Naive thymus-derived CD4-positive, alpha-beta T cell (primary cell): ENCODE measurements at regions of chr19 and their contacts with region 1.

Region 1: GRCh38 chr19:41746593-41747227 is 8.6 kb upstream of the CEACAM6 start:
- DNase-seq: peak in 8 of 9 donors; percentile 27 to 62 (median 48)
- ATAC-seq: peak; percentile 82
- H3K4me3 ChIP-seq: no peak overlapping the region
- H3K4me3 Mint-ChIP-seq: no peak overlapping the region
- H3K27ac ChIP-seq: no peak overlapping the region
- H3K27ac Mint-ChIP-seq: no peak overlapping the region
- H3K4me1 ChIP-seq: no peaks in the 10 kb centered on the region
- H3K4me1 Mint-ChIP-seq: peaks cover 0 to 10% (median 0%) of the 10 kb centered on the region in 7 donors
- H3K27me3 ChIP-seq: peaks cover 0 to 3% of the 10 kb centered on the region in 2 donors
- H3K27me3 Mint-ChIP-seq: peaks cover 45 to 71% (median 46%) of the 10 kb centered on the region in 5 donors

Region 2: DNA sequence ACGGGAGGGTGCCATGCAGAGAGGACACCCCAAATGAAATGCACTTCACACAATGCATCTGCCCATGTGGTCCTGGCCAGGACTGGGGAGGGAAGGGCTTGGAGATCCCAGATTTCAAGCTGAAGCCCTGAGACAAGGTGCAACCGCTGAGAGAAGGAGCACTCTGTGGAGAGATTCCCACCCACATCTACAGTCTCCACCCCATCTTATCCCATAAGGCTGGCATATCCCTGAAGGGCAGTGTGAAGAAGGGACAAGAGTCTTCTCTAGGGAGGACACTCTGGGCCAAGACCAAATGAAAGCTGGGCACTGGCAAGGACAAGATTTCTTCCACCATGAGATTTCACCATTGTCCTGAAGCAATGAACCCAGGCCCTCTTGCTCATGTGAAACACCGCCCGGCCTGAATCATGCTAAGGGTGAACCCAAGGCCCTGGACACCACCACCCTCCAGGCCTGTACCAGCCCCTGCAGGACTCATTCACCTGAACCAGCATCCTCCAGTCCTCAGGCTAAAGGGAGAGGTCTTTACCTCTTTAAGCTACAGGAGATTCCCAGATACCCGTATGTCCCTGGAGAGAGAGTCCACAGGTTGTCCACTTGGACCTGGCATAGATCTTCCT is 140.4 kb before region 1 on chr19:
- CTCF ChIA-PET with region 1: no interaction called
- POLR2A ChIA-PET with region 1: no interaction called
- intact Hi-C with region 1: no loop called
- DNase-seq: peak in 1 of 9 donors; percentile 12
- ATAC-seq: no peak
- H3K4me3 ChIP-seq: no peak overlapping the region
- H3K4me3 Mint-ChIP-seq: no peak overlapping the region
- H3K27ac ChIP-seq: no peak overlapping the region
- H3K27ac Mint-ChIP-seq: no peak overlapping the region
- H3K4me1 ChIP-seq: no peaks in the 10 kb centered on the region
- H3K4me1 Mint-ChIP-seq: no peaks in the 10 kb centered on the region
- H3K27me3 ChIP-seq: no peaks in the 10 kb centered on the region
- H3K27me3 Mint-ChIP-seq: peaks cover 0 to 44% (median 6%) of the 10 kb centered on the region in 5 donors

Region 3: DNA sequence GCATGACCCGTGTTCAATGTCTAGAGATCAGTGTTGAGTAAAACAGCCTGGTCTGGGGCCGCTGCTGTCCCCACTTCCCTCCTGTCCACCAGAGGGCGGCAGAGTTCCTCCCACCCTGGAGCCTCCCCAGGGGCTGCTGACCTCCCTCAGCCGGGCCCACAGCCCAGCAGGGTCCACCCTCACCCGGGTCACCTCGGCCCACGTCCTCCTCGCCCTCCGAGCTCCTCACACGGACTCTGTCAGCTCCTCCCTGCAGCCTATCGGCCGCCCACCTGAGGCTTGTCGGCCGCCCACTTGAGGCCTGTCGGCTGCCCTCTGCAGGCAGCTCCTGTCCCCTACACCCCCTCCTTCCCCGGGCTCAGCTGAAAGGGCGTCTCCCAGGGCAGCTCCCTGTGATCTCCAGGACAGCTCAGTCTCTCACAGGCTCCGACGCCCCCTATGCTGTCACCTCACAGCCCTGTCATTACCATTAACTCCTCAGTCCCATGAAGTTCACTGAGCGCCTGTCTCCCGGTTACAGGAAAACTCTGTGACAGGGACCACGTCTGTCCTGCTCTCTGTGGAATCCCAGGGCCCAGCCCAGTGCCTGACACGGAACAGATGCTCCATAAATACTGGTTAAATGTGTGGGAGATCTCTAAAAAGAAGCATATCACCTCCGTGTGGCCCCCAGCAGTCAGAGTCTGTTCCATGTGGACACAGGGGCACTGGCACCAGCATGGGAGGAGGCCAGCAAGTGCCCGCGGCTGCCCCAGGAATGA is 39.8 kb before region 1 on chr19:
- CTCF ChIA-PET with region 1: interaction called, 8 read pairs
- POLR2A ChIA-PET with region 1: no interaction called
- intact Hi-C with region 1: loop called (anchors 1 kb)
- DNase-seq: peak; percentile 58 to 79 (median 72)
- ATAC-seq: peak; percentile 95
- H3K4me3 ChIP-seq: peak overlapping the region; percentile 56
- H3K4me3 Mint-ChIP-seq: peak overlapping the region; percentile 60 to 81 (median 74)
- H3K27ac ChIP-seq: no peak overlapping the region
- H3K27ac Mint-ChIP-seq: no peak overlapping the region
- H3K4me1 ChIP-seq: no peaks in the 10 kb centered on the region
- H3K4me1 Mint-ChIP-seq: peaks cover 0 to 12% (median 5%) of the 10 kb centered on the region in 7 donors
- H3K27me3 ChIP-seq: no peaks in the 10 kb centered on the region
- H3K27me3 Mint-ChIP-seq: peaks cover 16 to 45% (median 29%) of the 10 kb centered on the region in 5 donors

Region 4: GRCh38 chr19:41718761-41719160 is 27.9 kb before region 1 on chr19:
- CTCF ChIA-PET with region 1: no interaction called
- POLR2A ChIA-PET with region 1: no interaction called
- intact Hi-C with region 1: no loop called
- DNase-seq: no peak
- ATAC-seq: no peak
- H3K4me3 ChIP-seq: no peak overlapping the region
- H3K4me3 Mint-ChIP-seq: no peak overlapping the region
- H3K27ac ChIP-seq: no peak overlapping the region
- H3K27ac Mint-ChIP-seq: no peak overlapping the region
- H3K4me1 ChIP-seq: no peaks in the 10 kb centered on the region
- H3K4me1 Mint-ChIP-seq: no peaks in the 10 kb centered on the region
- H3K27me3 ChIP-seq: no peaks in the 10 kb centered on the region
- H3K27me3 Mint-ChIP-seq: peaks cover 6 to 35% (median 28%) of the 10 kb centered on the region in 5 donors

Region 5: GRCh38 chr19:41893899-41894298 is 147.2 kb after region 1 on chr19:
- CTCF ChIA-PET with region 1: no interaction called
- POLR2A ChIA-PET with region 1: no interaction called
- intact Hi-C with region 1: no loop called
- DNase-seq: peak in 2 of 9 donors; percentile 25 to 31
- ATAC-seq: peak; percentile 47
- H3K4me3 ChIP-seq: no peak overlapping the region
- H3K4me3 Mint-ChIP-seq: peak overlapping the region in 9 of 10 donors; percentile 18 to 77 (median 66)
- H3K27ac ChIP-seq: peak overlapping the region; percentile 67
- H3K27ac Mint-ChIP-seq: peak overlapping the region; percentile 78 to 97 (median 89)
- H3K4me1 ChIP-seq: peaks cover 60 to 78% of the 10 kb centered on the region in 2 donors
- H3K4me1 Mint-ChIP-seq: peaks cover 39 to 85% (median 58%) of the 10 kb centered on the region in 7 donors
- H3K27me3 ChIP-seq: no peaks in the 10 kb centered on the region
- H3K27me3 Mint-ChIP-seq: no peaks in the 10 kb centered on the region